ENCODE measurements at regions of chr16 and their contacts with region 1.

Region 1: GRCh38 chr16:22183901-22184614 is 21.8 kb downstream of the SDR42E2 start:
- DNase-seq: no peak
- ATAC-seq: peak; percentile 77
- H3K4me3 ChIP-seq: no peak overlapping the region
- H3K27ac ChIP-seq: no peak overlapping the region
- H3K4me1 ChIP-seq: peaks cover 10% of the 10 kb centered on the region
- H3K27me3 ChIP-seq: no peaks in the 10 kb centered on the region
- CTCF ChIP-seq: peak; percentile 42 to 67 (median 56)
- EP300 ChIP-seq: no peak
- POLR2A ChIP-seq: no peak
- RAD21 ChIP-seq: 0 out of 2 replicates have a peak, but pooled peaks have one; percentile 26

Region 2: DNA sequence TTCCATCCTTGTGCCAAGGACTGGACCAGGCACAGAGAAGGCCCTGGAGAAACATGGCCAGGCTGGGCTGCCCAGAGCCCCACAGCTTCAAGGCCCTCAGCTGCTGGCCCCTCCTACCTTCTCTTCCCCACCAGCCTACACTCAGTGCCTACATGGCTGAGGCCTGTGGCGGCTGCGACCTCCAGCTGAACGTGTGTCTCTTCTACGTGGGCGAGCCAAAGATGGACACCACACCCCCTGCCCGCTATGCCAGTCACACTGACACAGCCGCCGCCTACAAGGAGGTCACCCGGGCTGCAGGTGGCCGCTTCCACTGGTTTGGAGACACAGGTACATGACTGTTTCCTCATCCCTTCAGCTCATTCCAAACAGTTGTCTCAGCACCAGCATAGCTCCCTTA is 51.3 kb before region 1 on chr16:
- CTCF ChIA-PET with region 1: no interaction called
- POLR2A ChIA-PET with region 1: no interaction called
- RAD21 ChIA-PET with region 1: interaction called, 3 read pairs
- SMC1A ChIA-PET with region 1: interaction called, 3 read pairs
- in situ Hi-C with region 1: loop called (anchors 5 kb)
- intact Hi-C with region 1: no loop called
- DNase-seq: no peak
- ATAC-seq: no peak
- H3K4me3 ChIP-seq: no peak overlapping the region
- H3K27ac ChIP-seq: no peak overlapping the region
- H3K4me1 ChIP-seq: no peaks in the 10 kb centered on the region
- H3K27me3 ChIP-seq: no peaks in the 10 kb centered on the region
- CTCF ChIP-seq: no peak
- EP300 ChIP-seq: no peak
- POLR2A ChIP-seq: no peak
- RAD21 ChIP-seq: no peak

Measured in GM12878 (cell line).